Adrenal gland (tissue), 19 donors: ENCODE measurements at regions of chr14 and their contacts with region 1.

Region 1: GRCh38 chr14:58501214-58501816 is 73.8 kb downstream of the KIAA0586 start:
- DNase-seq: peak in 2 of 7 donors; percentile 28 to 30
- H3K4me3 ChIP-seq: no peak overlapping the region
- H3K27ac ChIP-seq: no peak overlapping the region
- H3K4me1 ChIP-seq: no peaks in the 10 kb centered on the region
- H3K27me3 ChIP-seq: no peaks in the 10 kb centered on the region
- CTCF ChIP-seq: peak; percentile 63 to 90 (median 80)
- POLR2A ChIP-seq: no peak

Region 2: DNA sequence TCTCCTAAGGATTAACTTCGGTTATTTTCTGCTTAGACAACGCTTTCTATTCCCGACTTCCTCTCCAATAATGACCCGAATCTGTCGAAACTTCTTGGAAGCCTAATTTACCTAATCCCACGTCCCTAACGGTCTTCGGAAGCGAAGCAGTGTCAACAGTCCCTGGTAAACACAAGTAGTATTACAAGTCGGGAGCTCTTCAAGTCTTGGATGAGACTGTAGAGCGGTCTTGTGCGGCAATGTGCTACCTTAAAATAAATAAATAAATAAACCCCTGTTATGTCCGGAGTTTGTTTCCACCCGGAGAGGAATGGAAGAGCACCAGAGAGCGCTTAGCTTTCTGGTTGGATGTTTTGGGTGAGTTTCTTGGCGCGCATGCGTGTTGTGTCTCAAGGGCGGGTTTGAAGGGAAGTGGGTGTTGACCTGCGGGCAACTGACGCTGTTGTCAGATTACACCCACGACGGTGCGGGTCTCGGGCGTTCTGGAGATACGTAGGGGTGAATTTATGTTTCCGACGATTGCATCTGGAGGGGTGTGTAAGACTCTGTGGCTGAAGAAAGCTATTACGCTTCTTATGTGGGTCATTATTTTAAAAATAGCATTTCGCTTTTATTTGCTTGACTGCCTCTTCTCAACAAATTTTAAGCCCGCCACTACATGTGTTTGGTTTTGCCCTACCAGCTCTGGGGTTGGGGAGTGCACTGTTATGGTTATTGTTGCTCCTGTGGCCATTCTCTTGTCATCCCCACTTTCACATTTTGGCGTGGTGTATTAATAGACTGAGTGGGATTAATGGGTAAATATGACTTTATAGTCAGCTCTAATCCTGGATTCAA is 73.8 kb before region 1 on chr14 and contains the starts of genes KIAA0586 and TIMM9:
- intact Hi-C with region 1: no loop called
- DNase-seq: peak; percentile 94 to 99 (median 98)
- H3K4me3 ChIP-seq: peak within 1 kb of the TSS; percentile 66 to 95 (median 82)
- H3K27ac ChIP-seq: peak within 1 kb of the TSS; percentile 82 to 96 (median 88)
- H3K4me1 ChIP-seq: peaks cover 16 to 35% of the 10 kb centered on the region in 2 donors
- H3K27me3 ChIP-seq: no peaks in the 10 kb centered on the region
- CTCF ChIP-seq: no peak
- POLR2A ChIP-seq: peak; percentile 78 to 96
- total RNA-seq, gene KIAA0586: 11.1 to 28.7 (median 16.0) TPM
- total RNA-seq, gene TIMM9: 30.3 to 113 (median 46.9) TPM

Region 3: GRCh38 chr14:58626431-58626831 is 125.1 kb after region 1 on chr14:
- intact Hi-C with region 1: loop called in 1 of 2 experiments (anchors 10 kb)
- DNase-seq: no peak
- H3K4me3 ChIP-seq: no peak overlapping the region
- H3K27ac ChIP-seq: no peak overlapping the region
- H3K4me1 ChIP-seq: no peaks in the 10 kb centered on the region
- H3K27me3 ChIP-seq: no peaks in the 10 kb centered on the region
- CTCF ChIP-seq: no peak
- POLR2A ChIP-seq: no peak

Region 4: DNA sequence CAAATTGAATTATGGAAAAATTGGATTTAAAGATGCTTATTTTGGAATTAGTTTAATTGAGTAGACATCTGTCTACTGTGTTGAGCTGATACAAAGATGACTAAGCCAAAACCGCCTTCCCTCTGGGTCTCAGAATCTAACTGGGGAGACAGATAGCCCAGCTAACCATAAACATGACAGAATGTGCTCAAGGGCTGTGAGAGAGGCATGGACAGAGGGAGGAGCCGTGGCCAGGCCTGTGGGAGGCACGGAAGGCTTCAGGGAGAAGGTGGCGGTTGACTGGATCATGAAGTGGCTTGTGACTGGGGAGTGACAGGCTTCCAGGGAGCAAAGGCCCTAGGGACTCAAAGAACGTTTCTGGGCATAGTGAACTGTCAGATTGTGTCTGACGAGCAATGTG is 211.0 kb after region 1 on chr14:
- intact Hi-C with region 1: no loop called
- DNase-seq: no peak
- H3K4me3 ChIP-seq: no peak overlapping the region
- H3K27ac ChIP-seq: no peak overlapping the region
- H3K4me1 ChIP-seq: no peaks in the 10 kb centered on the region
- H3K27me3 ChIP-seq: no peaks in the 10 kb centered on the region
- CTCF ChIP-seq: no peak
- POLR2A ChIP-seq: no peak

Region 5: GRCh38 chr14:58864751-58865513 is 363.6 kb after region 1 on chr14:
- intact Hi-C with region 1: no loop called
- DNase-seq: no peak
- H3K4me3 ChIP-seq: no peak overlapping the region
- H3K27ac ChIP-seq: peak overlapping the region in 2 of 5 donors; percentile 34 to 51
- H3K4me1 ChIP-seq: no peaks in the 10 kb centered on the region
- H3K27me3 ChIP-seq: peaks cover 8% of the 10 kb centered on the region
- CTCF ChIP-seq: no peak
- POLR2A ChIP-seq: no peak

Region 6: GRCh38 chr14:59055439-59056045 is 554.2 kb after region 1 on chr14:
- intact Hi-C with region 1: loop called in 1 of 2 experiments (anchors 10 kb)
- DNase-seq: peak in 6 of 7 donors; percentile 22 to 62 (median 37)
- H3K4me3 ChIP-seq: no peak overlapping the region
- H3K27ac ChIP-seq: no peak overlapping the region
- H3K4me1 ChIP-seq: no peaks in the 10 kb centered on the region
- H3K27me3 ChIP-seq: no peaks in the 10 kb centered on the region
- CTCF ChIP-seq: peak; percentile 64 to 82 (median 72)
- POLR2A ChIP-seq: no peak